ENCODE measurements at regions of chr19 and their contacts with region 1.

Region 1: GRCh38 chr19:35628565-35629331 is at the start of gene RBM42:
- DNase-seq: peak; percentile 97
- ATAC-seq: peak; percentile 100
- H3K4me3 ChIP-seq: peak within 1 kb of the TSS; percentile 71 to 94
- H3K27ac ChIP-seq: peak within 1 kb of the TSS; percentile 18 to 94
- H3K4me1 ChIP-seq: no peaks in the 10 kb centered on the region
- H3K27me3 ChIP-seq: no peaks in the 10 kb centered on the region
- total RNA-seq, gene RBM42: 53.7 to 62.0 TPM

Region 2: DNA sequence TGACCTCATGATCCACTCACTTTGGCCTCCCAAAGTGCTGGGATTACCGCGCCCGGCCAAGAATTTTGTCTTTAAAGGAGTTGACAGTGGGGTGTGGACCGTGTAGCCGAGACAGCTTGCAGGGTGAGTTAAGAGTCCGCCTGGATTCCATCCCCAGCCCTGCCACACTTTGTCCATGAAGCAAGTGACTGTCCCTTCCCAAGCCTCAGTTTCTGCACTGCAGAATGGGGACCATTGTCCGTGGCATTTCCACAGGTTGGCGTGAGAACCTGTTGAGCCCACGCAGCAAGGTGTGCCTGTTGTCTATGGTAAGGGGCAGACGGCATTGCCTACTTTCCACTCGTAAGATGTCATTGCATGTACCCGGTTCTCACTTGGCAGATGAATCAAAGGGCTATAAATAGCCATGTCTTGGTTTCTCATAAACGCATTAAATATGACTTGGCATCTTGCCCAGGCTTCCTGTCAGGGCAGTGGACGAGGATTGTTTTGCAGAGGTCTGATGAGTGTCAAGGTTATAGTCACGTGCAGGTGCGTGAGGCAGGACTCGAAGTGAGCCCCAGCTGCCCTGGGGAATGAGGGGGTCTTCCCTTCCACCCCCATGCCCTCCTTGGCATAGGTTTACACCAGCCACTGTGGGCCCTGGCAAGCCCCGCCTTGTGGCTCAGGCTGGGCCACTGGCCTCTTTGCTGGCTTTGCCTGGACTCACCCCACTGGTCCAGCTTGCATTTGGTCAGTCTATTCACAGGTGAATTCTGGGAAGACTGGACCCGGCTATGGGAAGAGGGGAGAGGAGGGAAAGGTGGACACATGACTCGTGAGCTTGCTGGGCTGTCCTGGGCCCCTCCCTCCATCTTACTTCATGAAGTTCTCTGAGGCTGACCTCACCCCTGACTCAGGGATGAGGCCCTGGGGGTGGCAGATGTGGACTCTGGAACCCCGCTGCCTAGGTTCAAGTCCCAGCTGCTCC is 414.8 kb before region 1 on chr19:
- intact Hi-C with region 1: no loop called
- DNase-seq: peak; percentile 61 to 77
- ATAC-seq: peak; percentile 74
- H3K4me3 ChIP-seq: no peak overlapping the region
- H3K27ac ChIP-seq: no peak overlapping the region
- H3K4me1 ChIP-seq: no peaks in the 10 kb centered on the region
- H3K27me3 ChIP-seq: no peaks in the 10 kb centered on the region

Region 3: GRCh38 chr19:35643255-35644205 is 14.8 kb after region 1 on chr19:
- intact Hi-C with region 1: loop called in 1 of 2 experiments (anchors 2 kb)
- DNase-seq: peak; percentile 89 to 93
- ATAC-seq: peak; percentile 77
- H3K4me3 ChIP-seq: peak overlapping the region; percentile 23 to 74
- H3K27ac ChIP-seq: peak overlapping the region in 1 of 2 donors; percentile 96
- H3K4me1 ChIP-seq: no peaks in the 10 kb centered on the region
- H3K27me3 ChIP-seq: no peaks in the 10 kb centered on the region